ENCODE measurements at regions of chr5 and their contacts with region 1.

Region 1: DNA sequence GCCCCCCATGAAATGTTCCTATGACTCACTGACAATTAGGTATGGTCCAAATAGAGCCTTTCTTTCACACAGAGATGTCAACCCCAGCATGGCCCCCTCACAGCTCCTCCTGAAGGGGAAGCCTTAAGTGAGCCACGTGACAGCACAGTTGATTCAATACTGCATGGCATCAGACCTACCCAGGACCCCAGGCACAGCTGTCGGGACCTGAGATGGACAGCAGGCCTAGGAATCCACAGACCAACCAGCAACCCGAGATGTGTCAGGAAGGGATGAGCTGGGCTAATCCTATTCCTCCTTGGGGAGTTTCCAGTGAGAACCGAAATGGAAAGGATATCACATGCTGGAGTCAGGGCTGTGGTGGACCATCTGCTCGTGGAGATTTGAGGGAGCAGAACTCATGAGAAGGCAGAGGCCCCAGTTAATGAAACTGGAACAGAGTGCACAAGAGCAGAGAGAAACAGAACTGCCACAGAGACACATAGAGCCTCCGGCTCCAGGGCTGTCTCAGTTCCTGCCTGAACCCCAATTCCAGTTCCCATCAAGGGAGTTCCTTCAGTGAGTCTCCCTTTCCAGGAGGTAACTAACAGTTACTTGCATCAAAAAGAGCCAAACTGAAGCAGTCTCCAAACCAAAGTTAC is 42.1 kb upstream of the SMIM23 start:
- DNase-seq: no peak
- ATAC-seq: no peak
- H3K4me3 ChIP-seq: no peak overlapping the region
- H3K27ac ChIP-seq: no peak overlapping the region
- H3K4me1 ChIP-seq: peaks cover 2% of the 10 kb centered on the region
- H3K27me3 ChIP-seq: no peaks in the 10 kb centered on the region

Region 2: DNA sequence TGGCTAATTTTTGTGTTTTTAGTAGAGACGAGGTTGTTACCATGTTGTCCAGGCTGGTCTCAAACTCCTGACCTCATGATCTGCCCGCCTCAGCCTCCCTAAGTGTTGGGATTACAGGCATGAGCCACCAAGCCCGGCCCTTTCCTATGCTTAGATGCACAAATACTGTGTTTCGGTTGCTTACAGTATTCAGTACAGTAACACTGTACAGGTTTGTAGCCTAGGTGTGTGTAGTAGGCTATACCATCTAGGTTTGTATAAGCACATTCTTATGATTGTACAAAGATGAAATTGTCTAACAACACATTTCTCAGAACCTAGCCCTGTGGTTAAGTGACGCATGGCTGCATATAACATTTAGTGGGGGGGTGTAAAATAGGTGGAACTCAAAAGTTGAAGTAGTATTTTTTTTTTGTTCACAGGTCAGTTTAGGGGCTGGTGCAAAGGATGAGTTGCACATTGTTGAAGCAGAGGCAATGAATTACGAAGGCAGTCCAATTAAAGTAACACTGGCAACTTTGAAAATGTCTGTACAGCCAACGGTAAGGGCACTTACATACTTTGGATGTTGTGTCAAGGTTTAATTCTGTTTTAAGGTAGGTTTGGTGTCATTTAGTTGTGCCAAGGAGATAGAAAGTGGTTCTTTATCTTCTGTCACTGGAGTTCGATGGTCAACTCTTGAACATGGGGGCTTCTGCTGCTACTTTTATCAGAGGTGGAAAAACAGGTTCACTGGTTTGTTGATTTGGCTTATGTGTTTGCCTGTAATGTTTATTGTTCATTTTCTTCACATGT is 352.5 kb before region 1 on chr5:
- intact Hi-C with region 1: no loop called
- DNase-seq: no peak
- ATAC-seq: no peak
- H3K4me3 ChIP-seq: no peak overlapping the region
- H3K27ac ChIP-seq: no peak overlapping the region
- H3K4me1 ChIP-seq: peaks cover 4% of the 10 kb centered on the region
- H3K27me3 ChIP-seq: no peaks in the 10 kb centered on the region

Region 3: DNA sequence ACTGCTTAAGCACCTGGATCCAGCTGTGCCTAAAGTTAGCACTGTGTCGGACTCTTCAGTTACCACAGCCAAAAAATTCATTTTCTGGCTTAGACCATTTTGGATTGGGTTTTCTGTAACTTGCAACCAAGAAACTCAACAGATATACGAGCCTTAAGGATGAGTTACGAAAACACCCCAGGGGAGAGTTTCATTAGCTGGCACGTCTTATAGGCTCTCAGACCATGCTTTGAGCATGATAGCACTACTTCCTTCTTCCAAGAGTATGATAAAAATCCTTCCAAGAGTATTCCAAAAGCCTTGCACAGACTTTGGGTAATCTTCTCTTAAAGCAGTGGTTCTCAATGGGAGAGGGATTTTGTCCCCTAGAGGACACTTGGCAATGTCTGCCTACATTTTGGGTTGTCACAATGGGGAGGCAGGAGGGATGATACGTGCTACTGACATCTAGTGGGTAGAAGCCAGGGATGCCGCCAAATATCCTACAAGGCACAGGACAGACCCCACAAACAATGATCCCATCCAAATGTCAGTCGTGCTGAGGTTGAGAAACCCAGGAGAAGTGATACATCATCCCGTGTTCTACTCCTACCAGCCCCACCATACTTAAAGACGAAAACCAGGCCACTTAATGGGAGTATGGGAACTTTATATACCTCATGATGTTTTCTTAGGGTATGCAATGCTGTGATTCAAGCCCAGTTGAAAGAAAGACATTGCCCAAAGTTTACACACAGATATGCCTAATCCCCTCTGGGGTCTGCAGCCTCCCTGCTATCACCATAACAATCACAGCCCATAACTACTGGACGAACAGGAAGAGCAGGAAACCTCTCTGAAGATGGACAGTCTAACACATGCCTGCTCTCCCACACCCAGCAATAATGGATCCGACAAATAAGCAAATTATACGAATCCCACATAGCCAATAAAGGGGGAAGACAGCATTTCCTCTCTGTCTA is 107.0 kb after region 1 on chr5:
- intact Hi-C with region 1: loop called in 1 of 4 experiments (anchors 10 kb)
- DNase-seq: no peak
- ATAC-seq: peak; percentile 38 to 39
- H3K4me3 ChIP-seq: no peak overlapping the region
- H3K27ac ChIP-seq: no peak overlapping the region
- H3K4me1 ChIP-seq: no peaks in the 10 kb centered on the region
- H3K27me3 ChIP-seq: no peaks in the 10 kb centered on the region

Region 4: DNA sequence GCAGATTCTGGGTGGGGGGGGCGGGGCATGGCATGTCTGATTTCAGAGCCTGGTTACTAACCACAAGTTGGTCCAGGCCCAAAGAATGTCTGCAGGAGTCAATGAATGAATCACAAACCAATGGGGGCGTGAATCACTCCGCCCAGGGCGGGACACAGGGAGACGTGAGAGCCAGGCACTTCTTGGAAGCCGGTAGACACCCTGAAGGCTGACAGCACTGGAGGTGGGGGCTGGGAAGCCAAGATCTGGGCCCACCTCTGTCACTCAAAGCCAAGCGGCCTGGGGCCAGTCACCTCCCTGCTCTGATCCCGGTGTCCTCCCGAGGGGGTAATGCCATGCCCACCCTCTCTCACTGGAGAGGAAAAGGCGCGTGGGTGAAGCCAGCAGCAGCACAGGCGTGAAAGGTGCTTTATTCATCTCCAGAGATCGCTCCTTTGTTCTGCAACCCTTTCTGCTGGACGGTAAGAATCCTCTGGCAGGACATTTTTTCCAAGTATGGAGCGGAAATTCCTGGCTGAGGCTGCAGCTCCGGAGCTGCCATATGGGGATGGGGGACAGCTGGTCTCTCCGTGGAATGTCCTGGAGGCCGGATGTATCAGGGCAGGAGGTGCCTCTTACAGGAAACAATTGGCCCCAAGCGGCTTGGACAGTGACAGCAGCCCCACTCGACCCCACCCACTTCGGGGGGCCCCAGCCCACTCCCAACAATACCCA is 359.5 kb after region 1 on chr5:
- intact Hi-C with region 1: no loop called
- DNase-seq: peak; percentile 80 to 86 (median 83)
- ATAC-seq: peak; percentile 50 to 85
- H3K4me3 ChIP-seq: no peak overlapping the region
- H3K27ac ChIP-seq: peak overlapping the region; percentile 9
- H3K4me1 ChIP-seq: peaks cover 13% of the 10 kb centered on the region
- H3K27me3 ChIP-seq: no peaks in the 10 kb centered on the region

Measured in right cardiac atrium (tissue), 5 donors.